Gastrocnemius medialis (tissue), 4 donors: ENCODE measurements at regions of chr17 and their contacts with region 1.

Region 1: GRCh38 chr17:17613708-17614114 is 22.2 kb upstream of the PEMT start:
- DNase-seq: peak in 1 of 2 donors; percentile 25
- ATAC-seq: peak; percentile 74 to 92
- H3K4me3 ChIP-seq: no peak overlapping the region
- H3K27ac ChIP-seq: no peak overlapping the region
- H3K4me1 ChIP-seq: no peaks in the 10 kb centered on the region
- H3K27me3 ChIP-seq: no peaks in the 10 kb centered on the region
- CTCF ChIP-seq: peak; percentile 54 to 69 (median 65)
- POLR2A ChIP-seq: no peak

Region 2: DNA sequence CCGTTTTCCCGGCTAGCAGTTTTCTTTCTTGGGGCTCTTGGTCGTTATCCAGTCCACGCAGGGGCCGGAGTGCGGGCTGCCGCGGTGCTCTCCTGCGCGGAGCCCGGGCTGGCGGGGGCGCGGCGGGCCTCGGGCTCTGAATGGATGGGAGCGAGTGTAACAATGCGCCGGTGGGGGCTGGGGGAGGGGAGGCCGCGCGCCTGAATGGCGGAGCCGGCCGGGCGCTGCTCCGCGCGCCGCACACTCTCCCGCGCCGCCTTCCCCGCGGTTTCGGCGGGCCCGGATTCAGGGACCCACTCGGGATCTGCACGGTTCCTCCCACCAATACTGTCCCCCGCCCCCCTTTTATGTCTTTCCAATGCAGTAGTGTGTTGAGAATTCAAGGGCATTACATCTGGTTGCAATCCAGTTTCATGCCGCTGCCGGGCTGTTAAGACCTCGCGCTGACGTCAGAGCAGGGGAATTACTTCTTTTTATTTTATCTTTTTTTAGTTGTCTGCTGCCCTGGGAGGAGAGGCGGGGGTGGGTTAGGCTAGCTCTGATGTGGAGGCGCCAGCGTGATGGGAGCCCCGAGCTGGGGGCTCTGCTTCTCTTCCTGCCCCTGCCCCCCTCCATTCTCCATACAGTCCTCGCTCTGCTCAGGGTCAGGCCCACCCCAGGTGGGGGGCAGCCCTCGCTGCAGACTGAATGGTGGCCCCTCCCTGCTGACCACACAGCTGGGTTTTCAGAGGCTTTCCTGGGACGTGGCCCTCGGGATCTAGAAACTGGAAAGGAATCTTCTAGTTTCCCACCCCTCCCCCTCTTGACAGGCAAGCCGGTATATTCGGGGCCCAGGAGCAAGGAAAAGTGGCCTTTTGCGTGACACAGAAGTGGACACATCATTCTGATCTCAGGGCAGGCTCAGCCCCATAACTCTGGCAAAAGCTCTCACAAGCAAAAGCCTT is 69.3 kb after region 1 on chr17:
- in situ Hi-C with region 1: no loop called
- intact Hi-C with region 1: no loop called
- DNase-seq: peak; percentile 29 to 42
- ATAC-seq: peak; percentile 45 to 53
- H3K4me3 ChIP-seq: peak overlapping the region; percentile 77 to 95 (median 85)
- H3K27ac ChIP-seq: peak overlapping the region; percentile 58 to 87 (median 80)
- H3K4me1 ChIP-seq: peaks cover 18 to 26% of the 10 kb centered on the region in 2 donors
- H3K27me3 ChIP-seq: no peaks in the 10 kb centered on the region
- CTCF ChIP-seq: peak in 1 of 5 experiments; percentile 6
- POLR2A ChIP-seq: no peak

Region 3: DNA sequence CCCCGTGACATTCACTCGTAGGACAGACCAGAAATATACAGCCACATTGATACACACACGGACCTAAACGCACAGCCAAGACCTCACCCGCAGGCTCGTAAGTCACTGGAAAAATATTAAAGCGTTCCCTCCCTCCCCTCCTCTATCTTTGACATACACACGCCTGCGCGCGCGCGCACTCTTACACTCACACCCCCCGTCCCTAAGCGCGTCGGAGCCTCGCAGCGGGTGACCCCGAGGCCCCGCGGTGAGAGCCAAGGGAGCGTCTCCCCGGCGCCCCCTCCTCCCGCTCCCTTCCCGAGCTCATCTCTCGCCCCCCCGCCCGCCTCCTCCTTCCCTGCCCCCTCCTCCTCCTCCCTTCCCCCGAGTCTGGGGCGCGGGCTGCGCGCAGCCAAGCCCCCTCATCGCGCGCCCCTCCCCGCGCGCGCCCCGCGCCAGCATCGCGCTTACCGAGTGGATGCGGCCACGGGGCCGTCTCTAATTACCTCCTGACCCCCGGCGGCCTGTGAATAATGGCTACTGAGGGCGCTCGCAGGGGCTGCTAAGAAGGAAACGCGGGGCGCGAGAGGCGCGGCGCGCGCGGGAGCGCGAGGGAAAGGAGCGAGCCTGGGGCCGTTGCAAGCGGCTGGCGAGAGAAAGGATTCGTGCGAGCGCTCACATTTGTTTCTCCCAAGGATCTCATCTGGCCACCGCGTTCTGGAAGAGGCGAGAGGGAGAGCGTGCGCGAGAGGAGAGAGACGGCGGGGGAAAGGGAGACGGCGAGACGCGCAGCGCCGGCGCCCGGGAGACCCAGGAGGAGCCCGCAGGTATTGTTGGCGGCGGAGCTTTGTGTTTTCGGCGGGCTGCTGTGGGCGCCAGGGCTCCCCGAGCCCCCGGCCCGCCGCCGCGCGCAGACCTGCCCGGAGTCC is 109.9 kb after region 1 on chr17:
- in situ Hi-C with region 1: loop called in 1 of 4 experiments (anchors 25 kb)
- intact Hi-C with region 1: no loop called
- DNase-seq: no peak
- ATAC-seq: peak in 1 of 2 donors; percentile 25
- H3K4me3 ChIP-seq: peak overlapping the region; percentile 56 to 72 (median 62)
- H3K27ac ChIP-seq: no peak overlapping the region
- H3K4me1 ChIP-seq: peaks cover 4 to 19% of the 10 kb centered on the region in 2 donors
- H3K27me3 ChIP-seq: no peaks in the 10 kb centered on the region
- CTCF ChIP-seq: no peak
- POLR2A ChIP-seq: no peak